Esophagus muscularis mucosa (tissue), 4 donors: ENCODE measurements at regions of chr14 and their contacts with region 1.

Region 1: GRCh38 chr14:77616454-77617229 is at the start of gene SPTLC2:
- DNase-seq: peak; percentile 100
- H3K4me3 ChIP-seq: peak within 1 kb of the TSS; percentile 70 to 95 (median 89)
- H3K27ac ChIP-seq: peak within 1 kb of the TSS; percentile 78 to 91 (median 82)
- H3K4me1 ChIP-seq: peaks cover 14 to 23% (median 17%) of the 10 kb centered on the region in 4 donors
- H3K27me3 ChIP-seq: no peaks in the 10 kb centered on the region
- CTCF ChIP-seq: no peak
- EP300 ChIP-seq: no peak
- POLR2A ChIP-seq: peak; percentile 58
- total RNA-seq, gene SPTLC2: 14.5 to 25.3 (median 20.1) TPM

Region 2: DNA sequence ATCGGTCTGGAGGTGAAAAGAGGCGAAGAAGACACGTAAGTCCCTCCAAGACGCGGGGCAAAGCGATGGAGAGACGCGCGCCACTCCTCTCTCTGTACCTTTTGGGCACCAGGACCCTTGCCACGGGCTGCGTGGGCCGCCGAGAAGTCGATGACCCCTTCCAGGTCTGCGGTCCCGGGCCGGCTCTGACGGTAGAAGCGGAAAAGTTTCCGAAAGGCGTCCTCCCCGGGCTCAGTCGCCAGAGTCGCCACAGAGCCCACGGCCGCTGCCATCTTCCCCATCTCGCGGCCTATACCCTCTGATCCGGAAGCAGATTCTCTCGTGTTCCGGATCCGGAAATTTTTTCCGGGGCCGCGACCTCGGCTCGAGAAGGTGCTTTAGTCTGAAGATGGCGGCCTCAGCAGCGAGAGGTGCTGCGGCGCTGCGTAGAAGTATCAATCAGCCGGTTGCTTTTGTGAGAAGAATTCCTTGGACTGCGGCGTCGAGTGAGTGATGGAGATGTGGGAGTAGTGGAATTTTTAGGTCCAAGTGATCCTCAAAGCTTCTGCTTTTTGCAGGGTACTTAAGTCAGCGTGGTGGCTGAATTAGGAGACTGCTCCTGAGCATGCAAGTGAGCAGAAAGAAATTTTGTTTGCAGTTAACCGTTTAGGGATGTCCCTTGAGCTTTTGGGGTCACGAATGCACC is 91.2 kb after region 1 on chr14 and contains the starts of genes ALKBH1 and SLIRP:
- intact Hi-C with region 1: loop called (anchors 5 kb)
- DNase-seq: peak; percentile 96
- H3K4me3 ChIP-seq: peak within 1 kb of the TSS; percentile 78 to 90 (median 83)
- H3K27ac ChIP-seq: peak within 1 kb of the TSS; percentile 74 to 78 (median 74)
- H3K4me1 ChIP-seq: peaks cover 29 to 44% (median 34%) of the 10 kb centered on the region in 4 donors
- H3K27me3 ChIP-seq: no peaks in the 10 kb centered on the region
- CTCF ChIP-seq: no peak
- EP300 ChIP-seq: no peak
- POLR2A ChIP-seq: no peak
- total RNA-seq, gene ALKBH1: 8.0 to 13.3 (median 11.8) TPM
- total RNA-seq, gene SLIRP: 101 to 247 (median 166) TPM